ENCODE measurements at regions of chr21 and their contacts with region 1.

Region 1: DNA sequence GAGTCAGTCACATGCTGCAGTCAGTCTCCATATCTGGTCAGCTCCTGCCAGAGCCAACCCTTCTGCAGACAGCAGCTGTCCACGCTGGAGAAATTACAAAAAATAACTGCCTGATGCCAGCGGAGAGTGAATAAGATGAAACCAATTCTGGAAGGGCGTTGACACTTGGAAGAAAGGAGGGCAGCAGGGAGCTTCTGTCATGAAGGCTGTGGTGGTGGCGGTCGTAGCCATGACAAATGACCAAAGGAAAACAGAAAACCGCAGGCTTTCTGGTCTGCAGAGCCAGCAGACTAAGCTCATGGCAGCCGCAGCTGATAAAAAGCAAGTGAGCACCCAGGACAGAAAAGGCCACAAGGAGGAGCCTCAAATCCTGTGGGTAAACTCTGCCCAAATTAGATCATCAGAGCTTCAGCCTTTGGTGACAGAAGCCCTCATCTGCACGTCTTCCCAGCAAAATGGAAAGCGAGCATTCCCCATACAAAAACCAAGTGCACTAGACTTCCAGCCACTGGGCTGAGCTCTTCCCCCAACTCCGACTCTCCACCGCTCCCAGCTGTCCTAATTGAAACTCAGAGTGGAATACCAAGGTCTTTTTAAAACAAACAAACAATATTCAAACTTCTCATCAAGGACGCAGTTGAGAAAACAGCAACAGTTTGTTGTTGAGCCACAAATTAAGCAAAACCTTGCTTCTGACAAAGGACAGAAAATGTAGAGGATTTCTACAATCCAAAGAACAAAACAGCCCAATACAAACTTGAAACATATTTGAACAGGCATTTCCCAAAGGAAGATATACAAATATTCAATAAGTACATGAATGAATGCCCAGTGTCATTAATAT is 28.7 kb downstream of the RSPH1 start:
- DNase-seq: peak; percentile 13
- ATAC-seq: no peak
- H3K4me3 Mint-ChIP-seq: peak overlapping the region; percentile 6
- H3K27ac Mint-ChIP-seq: no peak overlapping the region
- H3K4me1 Mint-ChIP-seq: peaks cover 69% of the 10 kb centered on the region
- H3K27me3 Mint-ChIP-seq: peaks cover 3% of the 10 kb centered on the region
- CTCF ChIP-seq: no peak

Region 2: GRCh38 chr21:42593007-42593806 is 125.8 kb after region 1 on chr21:
- CTCF ChIA-PET with region 1: interaction called, 3 read pairs
- POLR2A ChIA-PET with region 1: interaction called, 10 read pairs
- intact Hi-C with region 1: no loop called
- DNase-seq: peak; percentile 60
- ATAC-seq: peak; percentile 79
- H3K4me3 Mint-ChIP-seq: no peak overlapping the region
- H3K27ac Mint-ChIP-seq: no peak overlapping the region
- H3K4me1 Mint-ChIP-seq: peaks cover 11% of the 10 kb centered on the region
- H3K27me3 Mint-ChIP-seq: peaks cover 14% of the 10 kb centered on the region
- CTCF ChIP-seq: no peak

Region 3: GRCh38 chr21:42666023-42666747 is 198.8 kb after region 1 on chr21:
- CTCF ChIA-PET with region 1: no interaction called
- POLR2A ChIA-PET with region 1: no interaction called
- intact Hi-C with region 1: no loop called
- DNase-seq: no peak
- ATAC-seq: no peak
- H3K4me3 Mint-ChIP-seq: no peak overlapping the region
- H3K27ac Mint-ChIP-seq: no peak overlapping the region
- H3K4me1 Mint-ChIP-seq: peaks cover 12% of the 10 kb centered on the region
- H3K27me3 Mint-ChIP-seq: peaks cover 4% of the 10 kb centered on the region
- CTCF ChIP-seq: no peak

Measured in activated B cell treated with CpG ODN at 0.5 μM for 24 hours (primary cell).